Aorta (tissue), 5 donors: ENCODE measurements at regions of chr5 and their contacts with region 1.

Region 1: DNA sequence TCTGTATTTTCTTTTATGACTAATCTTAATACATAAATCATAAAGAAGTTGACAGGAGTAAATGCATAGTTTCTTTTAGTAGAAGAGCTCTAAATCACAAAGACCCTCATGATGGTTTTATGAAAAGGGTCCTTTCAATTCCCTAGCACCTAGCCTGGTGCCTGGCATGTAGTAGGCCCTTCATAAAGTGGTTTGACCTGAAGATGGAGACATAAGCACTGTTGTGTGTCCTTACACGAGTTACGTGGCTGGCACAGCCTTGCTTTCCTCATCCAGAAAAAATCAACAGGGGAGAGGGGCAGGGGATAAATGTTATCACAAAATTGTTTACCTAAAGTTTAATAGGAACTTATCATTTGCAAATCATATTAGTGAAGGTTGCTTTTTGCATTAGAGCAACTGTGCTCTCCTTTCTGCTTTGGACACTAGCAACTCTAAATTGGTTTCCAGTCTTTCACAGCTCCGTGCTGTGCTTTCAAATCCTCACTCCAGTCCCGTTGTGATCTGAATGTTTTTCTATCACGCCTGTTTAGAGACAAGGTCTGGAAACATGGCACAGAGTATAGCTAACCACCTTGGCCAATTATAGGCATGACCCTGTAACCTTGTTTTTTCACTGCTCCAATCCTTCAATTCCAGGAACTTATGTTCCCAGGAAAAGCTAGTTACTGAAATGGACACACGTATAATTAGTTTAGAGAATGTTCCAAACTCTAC is 55.7 kb downstream of the ARL15 start:
- DNase-seq: no peak
- ATAC-seq: peak; percentile 69
- H3K4me3 ChIP-seq: peak overlapping the region in 1 of 2 donors; percentile 52
- H3K27ac ChIP-seq: no peak overlapping the region
- H3K4me1 ChIP-seq: peaks cover 0 to 2% of the 10 kb centered on the region in 2 donors
- H3K27me3 ChIP-seq: no peaks in the 10 kb centered on the region

Region 2: DNA sequence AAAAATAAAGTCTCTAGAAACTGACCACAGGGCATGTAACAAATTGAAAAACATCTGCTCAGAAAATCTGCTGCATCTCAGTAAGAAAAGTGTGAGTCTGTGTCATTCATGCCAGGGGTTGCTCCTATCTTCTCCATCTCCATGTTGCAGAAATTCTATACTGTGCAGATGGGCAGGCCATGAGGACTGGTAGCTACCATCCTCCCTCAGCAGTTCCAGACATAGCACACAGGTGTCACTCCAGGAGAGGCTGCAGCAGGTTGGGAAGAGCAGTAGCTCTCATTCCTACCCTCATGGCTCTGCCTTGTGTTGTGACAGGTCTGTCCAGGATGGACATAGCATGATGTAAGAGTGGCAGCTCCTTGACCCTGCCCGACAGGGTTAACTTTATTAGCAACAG is 520.8 kb before region 1 on chr5:
- intact Hi-C with region 1: no loop called
- DNase-seq: no peak
- ATAC-seq: no peak
- H3K4me3 ChIP-seq: no peak overlapping the region
- H3K27ac ChIP-seq: no peak overlapping the region
- H3K4me1 ChIP-seq: no peaks in the 10 kb centered on the region
- H3K27me3 ChIP-seq: no peaks in the 10 kb centered on the region

Region 3: GRCh38 chr5:54090495-54091084 is 164.1 kb before region 1 on chr5:
- intact Hi-C with region 1: no loop called
- DNase-seq: no peak
- ATAC-seq: no peak
- H3K4me3 ChIP-seq: no peak overlapping the region
- H3K27ac ChIP-seq: no peak overlapping the region
- H3K4me1 ChIP-seq: no peaks in the 10 kb centered on the region
- H3K27me3 ChIP-seq: no peaks in the 10 kb centered on the region

Region 4: DNA sequence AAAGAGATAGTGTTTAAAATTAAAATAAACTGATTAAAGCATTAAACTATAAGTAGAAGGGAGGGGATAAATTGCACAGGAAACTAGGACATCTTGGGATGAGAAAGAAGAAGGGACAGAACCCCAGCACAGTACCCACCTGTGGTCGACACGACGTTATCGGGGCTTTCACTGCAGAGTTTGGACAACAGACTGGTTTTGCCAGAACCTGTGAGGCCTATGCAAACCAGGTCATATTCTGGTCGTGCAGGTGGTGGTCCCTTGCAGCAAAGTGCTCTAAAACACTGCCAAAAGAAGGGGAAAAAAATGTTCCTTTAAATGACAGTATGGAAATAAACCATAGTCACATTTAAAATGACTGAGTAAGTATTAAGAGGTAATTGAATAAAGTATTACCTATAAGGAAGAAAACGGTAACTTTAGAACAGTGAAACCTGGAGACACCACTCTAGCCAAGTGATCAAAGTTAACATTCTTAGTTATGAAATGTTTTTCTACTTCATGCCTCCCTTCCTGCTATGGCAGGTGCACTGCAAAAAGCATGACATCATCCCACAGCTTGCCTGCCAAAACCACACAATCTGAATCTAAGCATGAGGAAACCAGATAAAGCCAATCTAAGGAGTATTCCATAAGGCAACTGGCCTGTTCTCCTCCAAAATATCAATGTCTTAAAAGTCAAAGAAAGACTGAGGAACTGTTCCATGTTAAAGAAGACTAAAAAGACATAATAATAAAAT is 82.8 kb before region 1 on chr5:
- intact Hi-C with region 1: no loop called
- DNase-seq: no peak
- ATAC-seq: no peak
- H3K4me3 ChIP-seq: no peak overlapping the region
- H3K27ac ChIP-seq: no peak overlapping the region
- H3K4me1 ChIP-seq: peaks cover 0 to under 1% of the 10 kb centered on the region in 2 donors
- H3K27me3 ChIP-seq: no peaks in the 10 kb centered on the region

Region 5: GRCh38 chr5:54310433-54311175 is 56.0 kb after region 1 on chr5 and contains the start of gene ARL15:
- intact Hi-C with region 1: no loop called
- DNase-seq: peak; percentile 99
- ATAC-seq: peak; percentile 98
- H3K4me3 ChIP-seq: peak within 1 kb of the TSS; percentile 69 to 97
- H3K27ac ChIP-seq: peak within 1 kb of the TSS in 1 of 2 donors; percentile 62
- H3K4me1 ChIP-seq: no peaks in the 10 kb centered on the region
- H3K27me3 ChIP-seq: no peaks in the 10 kb centered on the region
- total RNA-seq, gene ARL15: 27.9 to 44.7 TPM

Region 6: DNA sequence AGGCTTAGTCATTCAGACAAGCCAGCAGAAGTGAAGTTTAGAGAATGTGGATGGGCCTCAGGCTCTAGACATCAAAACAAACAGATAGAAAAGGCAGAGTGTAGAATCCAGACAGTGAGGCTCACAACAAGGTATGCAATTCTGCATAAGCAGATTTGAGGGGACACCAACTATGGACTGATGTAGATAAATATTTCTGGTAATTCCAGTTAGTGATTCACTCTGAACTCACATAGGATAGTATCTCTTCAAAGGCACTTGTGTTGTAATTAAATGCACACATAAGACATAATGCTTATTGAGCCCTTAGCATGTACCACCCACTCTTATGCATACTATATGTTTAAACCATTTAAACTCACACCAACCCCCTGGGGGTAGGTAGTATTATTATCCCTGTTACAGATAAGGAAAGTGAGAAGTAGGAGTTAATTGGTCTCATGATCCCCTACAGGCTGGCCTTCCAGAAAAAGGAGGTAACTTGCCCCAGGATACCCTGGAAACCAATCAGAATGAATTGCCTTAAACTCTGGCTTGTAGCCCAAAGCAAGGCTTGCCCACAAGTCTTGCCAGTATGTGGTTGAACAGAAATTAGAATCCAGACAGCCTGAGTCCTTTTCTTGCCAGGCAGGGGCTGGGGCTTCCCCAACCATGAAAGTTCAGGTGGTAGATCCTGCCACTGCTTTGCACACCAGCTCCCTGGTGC is 161.4 kb after region 1 on chr5:
- intact Hi-C with region 1: loop called (anchors 5 kb)
- DNase-seq: no peak
- ATAC-seq: no peak
- H3K4me3 ChIP-seq: no peak overlapping the region
- H3K27ac ChIP-seq: no peak overlapping the region
- H3K4me1 ChIP-seq: no peaks in the 10 kb centered on the region
- H3K27me3 ChIP-seq: no peaks in the 10 kb centered on the region

Region 7: GRCh38 chr5:54480296-54480695 is 225.7 kb after region 1 on chr5:
- intact Hi-C with region 1: loop called in 1 of 2 experiments (anchors 5 kb)
- DNase-seq: no peak
- ATAC-seq: no peak
- H3K4me3 ChIP-seq: no peak overlapping the region
- H3K27ac ChIP-seq: no peak overlapping the region
- H3K4me1 ChIP-seq: no peaks in the 10 kb centered on the region
- H3K27me3 ChIP-seq: no peaks in the 10 kb centered on the region